Left lung (tissue), 14 donors: ENCODE measurements at regions of chr3 and their contacts with region 1.

Region 1: DNA sequence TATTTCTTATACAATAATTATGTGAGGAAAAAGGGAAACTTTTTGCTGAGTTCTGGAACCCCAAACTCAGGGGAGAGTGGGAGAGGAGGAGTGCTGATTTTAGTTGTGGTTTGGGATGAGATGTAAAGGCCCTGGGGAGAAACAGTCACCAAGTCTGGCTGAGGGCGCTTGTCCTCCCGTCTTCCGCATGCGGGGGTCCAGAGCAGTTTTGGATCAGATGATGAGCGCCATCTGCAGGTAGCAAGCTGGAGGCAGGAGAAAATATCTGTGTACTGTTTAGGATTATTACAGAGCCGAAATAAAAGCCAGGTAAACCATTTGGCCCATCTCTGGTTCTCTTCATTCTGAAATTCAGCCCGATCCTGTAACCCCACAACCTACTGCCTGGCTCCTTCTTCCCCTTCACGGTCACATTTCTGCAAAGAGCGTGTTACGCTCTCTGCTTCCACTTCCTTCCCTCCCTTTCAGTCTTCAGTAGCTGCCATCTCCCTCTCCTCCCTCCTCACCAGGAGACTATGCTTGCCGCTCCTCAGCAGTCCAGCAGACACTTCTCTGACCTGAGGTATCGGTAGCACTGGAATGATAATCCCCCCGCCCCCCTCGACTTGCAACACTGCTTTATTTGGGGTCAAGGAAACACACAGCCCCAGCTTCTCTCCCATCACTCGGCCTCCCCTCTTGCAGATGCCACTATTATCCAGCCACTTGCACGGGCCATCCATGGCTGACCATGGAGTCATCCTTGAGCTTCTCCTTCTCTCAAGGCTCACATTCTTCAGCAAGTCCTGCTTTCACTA is 1.4 kb upstream of the PARP14 start:
- DNase-seq: peak in 3 of 4 donors; percentile 75 to 89 (median 82)
- ATAC-seq: peak; percentile 70
- H3K4me3 ChIP-seq: peak overlapping the region; percentile 10 to 90
- H3K27ac ChIP-seq: peak overlapping the region; percentile 96 to 98
- H3K4me1 ChIP-seq: peaks cover 13 to 52% of the 10 kb centered on the region in 2 donors
- H3K27me3 ChIP-seq: no peaks in the 10 kb centered on the region
- CTCF ChIP-seq: peak; percentile 58 to 69

Region 2: GRCh38 chr3:122458992-122459391 is 220.3 kb before region 1 on chr3:
- intact Hi-C with region 1: loop called in 1 of 2 experiments (anchors 5 kb)
- DNase-seq: peak in 2 of 4 donors; percentile 4 to 34
- ATAC-seq: peak; percentile 71
- H3K4me3 ChIP-seq: no peak overlapping the region
- H3K27ac ChIP-seq: no peak overlapping the region
- H3K4me1 ChIP-seq: no peaks in the 10 kb centered on the region
- H3K27me3 ChIP-seq: no peaks in the 10 kb centered on the region
- CTCF ChIP-seq: peak in 1 of 2 donors; percentile 24

Region 3: DNA sequence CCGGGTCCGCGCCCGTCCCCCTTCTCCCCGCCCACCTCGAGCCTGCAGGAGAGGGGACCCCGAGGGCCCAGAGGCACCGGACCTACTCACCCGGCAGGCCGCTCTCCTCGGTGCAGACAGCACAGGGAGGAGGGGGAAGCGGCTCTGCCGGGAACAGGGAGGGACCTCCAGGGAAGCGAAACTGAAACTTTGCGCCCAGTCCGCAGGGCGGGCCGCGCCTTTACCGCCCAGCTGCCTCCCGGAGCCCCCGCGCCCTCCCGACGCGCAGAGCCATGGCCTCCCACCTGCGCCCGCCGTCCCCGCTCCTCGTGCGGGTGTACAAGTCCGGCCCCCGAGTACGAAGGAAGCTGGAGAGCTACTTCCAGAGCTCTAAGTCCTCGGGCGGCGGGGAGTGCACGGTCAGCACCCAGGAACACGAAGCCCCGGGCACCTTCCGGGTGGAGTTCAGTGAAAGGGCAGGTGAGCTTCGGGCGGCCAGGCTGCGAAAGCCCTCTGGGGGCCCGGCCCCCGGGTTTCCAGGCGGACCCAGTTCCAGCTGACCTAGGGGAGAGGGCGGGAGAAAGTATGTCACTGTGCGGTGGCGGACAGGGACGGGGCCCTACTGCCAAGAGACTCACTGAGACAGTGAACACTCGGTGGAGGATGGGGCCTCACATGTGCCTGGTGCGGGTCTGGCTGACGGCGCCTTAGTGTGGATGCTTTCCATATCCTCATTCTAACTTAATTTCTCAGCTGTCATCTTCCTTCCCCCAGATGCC is 114.9 kb before region 1 on chr3 and contains the starts of genes DTX3L and PARP9:
- intact Hi-C with region 1: loop called in 1 of 2 experiments (anchors 5 kb)
- DNase-seq: peak; percentile 77 to 96 (median 91)
- ATAC-seq: peak; percentile 98
- H3K4me3 ChIP-seq: peak within 1 kb of the TSS; percentile 81 to 96
- H3K27ac ChIP-seq: peak within 1 kb of the TSS; percentile 96 to 98
- H3K4me1 ChIP-seq: peaks cover 16 to 84% of the 10 kb centered on the region in 2 donors
- H3K27me3 ChIP-seq: no peaks in the 10 kb centered on the region
- CTCF ChIP-seq: no peak
- polyA plus RNA-seq, gene DTX3L: 19.2 to 23.2 (median 22.1) TPM
- polyA plus RNA-seq, gene PARP9: 17.2 to 21.5 (median 20.2) TPM